Psoas muscle (tissue), 8 donors: ENCODE measurements at regions of chr9 and their contacts with region 1.

Region 1: DNA sequence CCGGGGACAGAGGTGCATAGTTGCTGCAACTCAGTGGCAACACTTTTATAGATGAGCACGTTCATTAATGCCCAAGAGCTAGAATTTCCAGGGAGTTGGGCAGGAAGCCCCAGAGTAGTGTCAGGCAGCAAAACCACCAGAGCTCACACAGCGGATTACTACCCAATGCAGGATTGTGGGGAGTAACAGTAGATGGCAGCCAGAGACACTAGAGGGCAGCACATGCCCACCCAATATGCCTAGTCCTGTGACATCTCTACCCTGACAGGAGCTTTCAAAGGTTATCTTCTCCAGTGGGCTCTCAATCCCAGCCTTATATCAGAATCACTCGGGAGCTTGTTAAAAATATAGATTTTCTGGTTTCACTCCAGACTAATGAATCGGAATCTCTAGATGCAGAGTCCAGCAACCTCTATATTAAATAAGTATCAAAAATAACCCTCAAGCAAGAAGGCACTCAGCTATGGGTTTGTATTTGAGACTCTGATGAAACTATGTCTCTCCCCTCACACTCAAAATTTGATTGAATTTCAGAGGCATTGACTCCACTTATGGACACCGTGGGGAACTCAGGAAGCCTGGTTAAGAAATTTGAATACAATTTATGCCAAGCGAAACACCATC is 58.4 kb upstream of the PHF24 start:
- DNase-seq: peak; percentile 77 to 85
- ATAC-seq: peak; percentile 98 to 100 (median 100)
- H3K4me3 ChIP-seq: no peak overlapping the region
- H3K27ac ChIP-seq: no peak overlapping the region
- H3K4me1 ChIP-seq: no peaks in the 10 kb centered on the region
- H3K27me3 ChIP-seq: peaks cover 0 to 15% (median 1%) of the 10 kb centered on the region in 3 donors
- CTCF ChIP-seq: peak; percentile 84

Region 2: GRCh38 chr9:34701769-34702736 is 197.6 kb before region 1 on chr9:
- intact Hi-C with region 1: no loop called
- DNase-seq: peak; percentile 81 to 90
- ATAC-seq: peak; percentile 87 to 96 (median 92)
- H3K4me3 ChIP-seq: peak overlapping the region; percentile 84
- H3K27ac ChIP-seq: peak overlapping the region; percentile 3
- H3K4me1 ChIP-seq: no peaks in the 10 kb centered on the region
- H3K27me3 ChIP-seq: peaks cover 0 to 4% (median 0%) of the 10 kb centered on the region in 3 donors
- CTCF ChIP-seq: peak; percentile 98

Region 3: DNA sequence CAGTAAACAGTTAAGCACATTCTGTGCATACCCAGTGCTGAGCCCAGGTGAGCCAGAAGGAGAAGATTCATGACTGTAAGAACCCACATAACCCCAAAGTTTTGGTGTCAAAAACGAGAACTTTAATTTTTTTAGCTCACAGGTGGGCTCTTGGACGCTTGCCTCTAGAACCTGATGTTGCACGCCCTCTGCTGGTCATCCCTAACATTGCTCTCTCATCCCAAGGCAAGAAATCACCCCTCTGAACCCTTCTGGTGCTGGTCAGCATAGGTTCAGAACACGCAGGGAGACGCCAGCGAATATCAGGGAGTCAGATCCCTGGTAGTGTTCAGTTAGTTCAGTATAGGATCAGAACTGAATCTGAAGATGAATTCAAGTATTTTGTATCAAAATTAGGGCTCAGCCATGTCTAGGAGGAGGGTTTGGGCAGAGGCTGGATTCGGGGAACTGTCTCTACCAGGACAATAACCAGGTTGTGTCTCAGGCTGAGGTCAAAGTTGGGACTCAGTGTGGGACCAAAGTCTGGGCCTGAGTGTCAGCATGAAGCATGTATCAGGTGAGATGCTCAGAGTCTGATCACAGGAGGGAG is 85.8 kb after region 1 on chr9:
- intact Hi-C with region 1: loop called (anchors 1 to 2 kb)
- DNase-seq: peak in 1 of 2 donors; percentile 39
- ATAC-seq: no peak
- H3K4me3 ChIP-seq: no peak overlapping the region
- H3K27ac ChIP-seq: no peak overlapping the region
- H3K4me1 ChIP-seq: peaks cover 4% of the 10 kb centered on the region
- H3K27me3 ChIP-seq: no peaks in the 10 kb centered on the region
- CTCF ChIP-seq: peak; percentile 79

Region 4: GRCh38 chr9:35051069-35051967 is 151.7 kb after region 1 on chr9:
- intact Hi-C with region 1: loop called in 1 of 2 experiments (anchors 5 kb)
- DNase-seq: peak; percentile 30 to 70
- ATAC-seq: peak; percentile 88 to 92 (median 90)
- H3K4me3 ChIP-seq: no peak overlapping the region
- H3K27ac ChIP-seq: peak overlapping the region; percentile 74
- H3K4me1 ChIP-seq: peaks cover 5% of the 10 kb centered on the region
- H3K27me3 ChIP-seq: no peaks in the 10 kb centered on the region
- CTCF ChIP-seq: peak; percentile 76

Region 5: DNA sequence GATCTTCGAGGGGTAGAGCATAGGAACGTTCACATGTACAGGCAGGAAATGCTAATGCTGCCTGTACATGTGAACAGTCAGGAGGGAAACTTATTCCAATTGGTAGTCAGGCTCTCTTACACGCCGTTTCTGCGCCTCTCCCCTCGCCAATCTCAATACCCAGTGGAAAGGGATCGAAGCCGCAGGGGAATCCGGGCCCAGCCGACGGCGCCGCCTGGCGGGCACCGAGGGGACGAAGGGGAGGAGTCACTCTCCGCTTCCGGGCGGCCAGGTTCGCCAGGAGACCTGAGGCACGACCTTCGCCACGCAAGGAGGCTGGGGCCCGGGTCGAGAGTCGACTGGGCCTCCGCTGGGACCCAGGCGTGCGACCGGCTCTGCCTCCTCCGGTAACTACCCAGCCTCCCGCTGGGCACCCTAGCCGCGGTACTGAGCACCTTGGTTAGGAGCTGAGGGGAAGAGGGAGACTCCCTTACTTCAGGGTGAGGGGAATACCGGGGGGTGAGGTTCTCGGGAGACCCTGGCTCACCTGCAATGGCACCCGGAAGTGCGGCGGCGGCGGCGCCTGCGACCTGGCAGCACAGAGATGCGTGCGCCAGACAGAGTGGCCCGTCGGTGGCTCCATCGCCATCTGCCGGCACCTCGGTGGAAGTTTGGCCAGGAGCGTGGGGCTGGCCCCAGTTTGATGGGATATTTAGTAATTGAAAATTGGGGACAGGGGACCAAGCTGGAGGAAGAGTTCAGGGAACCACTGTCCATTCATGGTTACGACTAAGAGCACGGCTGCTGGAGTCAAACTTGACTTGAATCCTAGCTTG is 196.6 kb after region 1 on chr9 and contains the start of gene PIGO:
- intact Hi-C with region 1: loop called (anchors 2 to 5 kb)
- DNase-seq: peak; percentile 90 to 95
- ATAC-seq: peak; percentile 94 to 97 (median 95)
- H3K4me3 ChIP-seq: peak within 1 kb of the TSS; percentile 87
- H3K27ac ChIP-seq: peak within 1 kb of the TSS; percentile 98
- H3K4me1 ChIP-seq: peaks cover 3% of the 10 kb centered on the region
- H3K27me3 ChIP-seq: no peaks in the 10 kb centered on the region
- CTCF ChIP-seq: peak; percentile 59
- total RNA-seq, gene PIGO: 6.8 to 11.3 (median 8.6) TPM

Region 6: GRCh38 chr9:35258676-35259474 is 359.2 kb after region 1 on chr9:
- intact Hi-C with region 1: loop called in 1 of 2 experiments (anchors 10 kb)
- DNase-seq: peak; percentile 68 to 79
- ATAC-seq: peak; percentile 61 to 92 (median 74)
- H3K4me3 ChIP-seq: no peak overlapping the region
- H3K27ac ChIP-seq: no peak overlapping the region
- H3K4me1 ChIP-seq: peaks cover 11% of the 10 kb centered on the region
- H3K27me3 ChIP-seq: no peaks in the 10 kb centered on the region
- CTCF ChIP-seq: peak; percentile 77

Region 7: DNA sequence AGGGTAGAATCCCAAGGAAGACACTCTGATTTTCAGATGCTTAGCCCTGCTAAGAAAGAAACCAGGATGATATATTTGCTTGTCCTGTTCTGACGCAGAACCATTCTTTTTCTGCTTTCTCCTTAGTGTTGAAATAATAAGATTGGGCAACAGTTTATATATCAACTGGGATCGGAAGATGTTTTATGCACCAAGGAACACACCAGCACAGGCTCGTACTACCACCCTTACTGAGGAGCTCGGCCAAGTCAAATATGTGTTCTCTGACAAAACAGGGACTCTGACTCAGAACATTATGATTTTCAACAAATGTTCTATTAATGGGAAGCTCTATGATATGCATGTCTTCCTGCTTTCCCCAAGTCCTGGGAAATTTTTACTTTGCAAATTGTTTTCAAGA is 571.2 kb after region 1 on chr9:
- intact Hi-C with region 1: loop called in 1 of 2 experiments (anchors 10 kb)
- DNase-seq: no peak
- ATAC-seq: no peak
- H3K4me3 ChIP-seq: no peak overlapping the region
- H3K27ac ChIP-seq: no peak overlapping the region
- H3K4me1 ChIP-seq: no peaks in the 10 kb centered on the region
- H3K27me3 ChIP-seq: peaks cover 0 to 3% (median 0%) of the 10 kb centered on the region in 3 donors
- CTCF ChIP-seq: no peak